RWPE1 (cell line): ENCODE measurements at regions of chr11 and their contacts with region 1.

Region 1: DNA sequence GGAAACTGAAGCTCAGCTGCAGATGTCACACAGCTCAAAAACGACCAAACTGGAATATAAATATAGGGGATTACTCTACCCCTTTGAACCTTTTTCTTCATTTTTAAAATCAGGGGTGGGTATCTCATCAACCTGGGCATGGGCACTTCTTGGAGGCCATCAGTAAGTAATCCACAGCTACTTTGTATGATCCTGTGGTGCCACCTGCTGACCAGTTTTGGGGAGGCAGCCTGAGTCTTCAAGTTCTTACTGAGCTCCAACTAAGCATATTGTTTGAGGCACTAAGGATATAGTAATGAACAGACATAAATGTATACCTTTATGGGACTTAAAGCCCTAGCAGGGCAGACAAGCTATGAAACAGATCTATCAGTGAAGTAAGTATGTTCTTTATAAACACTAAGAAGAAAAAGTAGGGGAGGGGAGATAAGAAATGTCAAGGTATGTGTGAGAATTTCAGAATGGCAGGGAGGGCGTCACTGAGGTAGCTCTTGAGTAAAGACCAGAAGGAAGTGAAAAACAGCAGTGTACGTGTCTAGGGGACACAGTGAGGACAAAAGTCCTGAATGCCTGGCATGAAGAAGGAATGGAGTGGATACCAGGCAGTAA is 18.4 kb downstream of the TUB start:
- DNase-seq: peak; percentile 60
- H3K27ac ChIP-seq: no peak overlapping the region
- CTCF ChIP-seq: peak; percentile 82

Region 2: GRCh38 chr11:7986768-7987559 is 112.4 kb before region 1 on chr11 and contains the start of gene EIF3F:
- CTCF ChIA-PET with region 1: interaction called, 10 read pairs
- POLR2A ChIA-PET with region 1: no interaction called
- DNase-seq: peak; percentile 98
- H3K27ac ChIP-seq: peak within 1 kb of the TSS; percentile 72
- CTCF ChIP-seq: peak; percentile 87

Region 3: DNA sequence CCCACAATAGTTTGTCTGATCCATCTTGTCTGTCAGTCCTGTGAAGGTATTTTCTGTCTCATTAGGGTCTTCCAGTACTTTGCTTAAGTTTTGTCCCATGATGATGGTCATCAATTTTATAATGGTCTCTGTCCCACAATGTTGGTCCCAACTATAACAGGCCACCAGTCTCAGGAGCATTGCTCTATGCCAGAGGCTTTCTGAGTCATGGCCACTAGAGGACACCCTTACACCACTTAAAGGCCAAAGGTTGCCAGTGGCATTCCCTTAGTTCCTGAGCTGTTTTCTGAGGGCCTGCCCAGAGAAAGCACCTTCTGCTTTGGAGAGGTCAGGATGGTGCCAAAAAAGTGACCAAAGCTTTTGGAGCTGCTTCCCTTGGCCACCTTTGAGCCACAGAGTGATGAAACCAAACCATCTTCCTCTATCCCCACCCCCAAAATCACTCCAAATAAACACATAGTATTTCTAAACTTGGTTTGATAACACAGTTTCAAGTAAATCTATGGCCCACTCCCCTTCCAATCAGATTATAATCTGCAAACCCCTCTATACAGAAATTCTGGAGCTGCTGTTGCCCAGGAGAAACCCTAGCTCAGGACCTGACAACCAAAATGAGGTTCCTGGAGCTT is 92.9 kb before region 1 on chr11:
- CTCF ChIA-PET with region 1: interaction called, 63 read pairs
- POLR2A ChIA-PET with region 1: no interaction called
- DNase-seq: peak; percentile 63
- H3K27ac ChIP-seq: no peak overlapping the region
- CTCF ChIP-seq: peak; percentile 84

Region 4: GRCh38 chr11:8015753-8016239 is 83.6 kb before region 1 on chr11:
- CTCF ChIA-PET with region 1: interaction called, 17 read pairs
- POLR2A ChIA-PET with region 1: no interaction called
- DNase-seq: no peak
- H3K27ac ChIP-seq: no peak overlapping the region
- CTCF ChIP-seq: no peak

Region 5: GRCh38 chr11:8033305-8034105 is 65.9 kb before region 1 on chr11:
- CTCF ChIA-PET with region 1: interaction called, 67 read pairs
- POLR2A ChIA-PET with region 1: no interaction called
- DNase-seq: peak; percentile 74
- H3K27ac ChIP-seq: no peak overlapping the region
- CTCF ChIP-seq: peak; percentile 85

Region 6: DNA sequence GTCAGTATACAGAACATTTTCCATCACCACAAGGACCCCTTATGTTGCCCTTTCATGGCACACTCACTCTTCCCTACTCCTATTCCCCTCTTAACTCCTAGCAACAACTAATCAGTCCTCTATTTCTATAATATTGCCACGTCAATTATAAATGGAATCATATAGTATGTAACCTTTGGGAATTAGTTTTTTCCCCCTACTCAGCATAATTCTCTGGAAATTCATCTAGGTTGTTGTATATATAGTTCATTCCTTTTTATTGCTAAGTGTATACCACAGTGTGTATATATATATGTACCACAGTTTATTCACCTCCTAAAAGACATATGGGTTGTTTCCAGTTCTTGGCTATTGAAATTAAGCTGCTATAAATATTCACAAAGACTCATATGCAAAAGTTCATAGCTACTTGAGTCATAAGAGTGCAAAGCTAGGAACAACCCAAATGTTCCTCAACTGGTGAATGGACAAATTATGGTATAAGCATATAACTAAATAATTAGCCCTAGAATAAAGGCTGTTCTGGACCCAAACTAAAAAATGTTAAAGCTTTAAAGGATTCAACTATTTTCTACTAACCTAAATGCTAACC is 22.9 kb after region 1 on chr11:
- CTCF ChIA-PET with region 1: no interaction called
- POLR2A ChIA-PET with region 1: no interaction called
- DNase-seq: no peak
- H3K27ac ChIP-seq: no peak overlapping the region
- CTCF ChIP-seq: no peak